BJ (cell line): ENCODE measurements at regions of chr19 and their contacts with region 1.

Region 1: DNA sequence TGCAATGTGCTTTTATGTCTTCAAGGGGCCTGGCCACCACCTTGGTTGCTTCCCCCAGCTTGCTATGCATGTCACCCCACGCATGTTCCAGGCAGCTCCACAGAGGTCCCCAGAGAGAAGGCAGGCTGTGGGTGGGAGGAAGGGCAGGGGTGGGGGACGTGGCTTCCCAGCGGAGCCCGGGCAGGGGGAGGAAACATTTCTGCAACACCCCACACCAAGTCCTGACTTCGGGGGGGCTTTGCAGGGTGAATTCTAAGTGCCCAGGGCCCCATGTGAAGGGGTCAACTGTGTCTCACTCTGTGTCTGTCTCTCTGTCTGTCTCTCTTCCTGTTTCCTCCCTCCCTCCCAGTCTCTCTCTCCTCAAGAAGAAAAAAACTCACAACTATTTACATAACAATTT is 39.6 kb downstream of the LTBP4 start:
- DNase-seq: no peak
- H3K4me3 ChIP-seq: no peak overlapping the region
- H3K27me3 ChIP-seq: no peaks in the 10 kb centered on the region
- CTCF ChIP-seq: no peak

Region 2: DNA sequence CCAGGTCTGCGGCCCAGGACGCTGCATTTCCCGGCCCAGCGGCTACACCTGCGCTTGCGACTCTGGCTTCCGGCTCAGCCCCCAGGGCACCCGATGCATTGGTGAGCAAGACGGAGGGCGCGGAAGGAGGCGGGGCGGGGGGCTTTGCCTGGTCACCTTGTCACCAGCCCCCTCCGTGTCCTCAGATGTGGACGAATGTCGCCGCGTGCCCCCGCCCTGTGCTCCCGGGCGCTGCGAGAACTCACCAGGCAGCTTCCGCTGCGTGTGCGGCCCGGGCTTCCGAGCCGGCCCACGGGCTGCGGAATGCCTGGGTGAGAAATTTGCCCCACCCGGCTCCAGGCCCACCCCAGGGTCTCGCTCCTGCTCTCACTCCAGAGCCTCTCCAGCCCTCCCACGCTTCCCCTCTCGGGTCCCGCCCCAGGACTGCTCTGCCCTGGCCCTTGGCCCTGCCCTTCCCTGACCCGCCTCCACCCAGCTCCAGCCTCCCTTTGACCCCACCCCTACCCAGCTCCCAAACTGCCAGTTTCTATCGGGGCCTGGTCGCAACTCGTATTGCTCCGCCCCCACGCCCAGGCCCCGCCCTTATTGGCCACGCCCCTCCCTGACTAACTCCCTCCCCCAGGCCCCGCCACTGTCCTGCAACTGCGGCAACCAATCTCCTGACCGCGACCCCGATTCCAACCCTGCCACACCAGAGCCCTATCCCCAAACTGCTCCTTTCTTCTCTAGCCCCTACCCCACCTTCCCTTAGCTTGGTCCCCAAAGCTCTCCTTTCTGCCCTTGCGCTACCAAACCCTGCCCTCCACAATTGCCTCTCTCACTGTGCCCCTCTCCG is 31.0 kb before region 1 on chr19:
- CTCF ChIA-PET with region 1: interaction called, 171 read pairs
- POLR2A ChIA-PET with region 1: no interaction called
- DNase-seq: no peak
- H3K4me3 ChIP-seq: peak overlapping the region; percentile 27
- H3K27me3 ChIP-seq: no peaks in the 10 kb centered on the region
- CTCF ChIP-seq: no peak